Left cardiac atrium (tissue), 4 donors: ENCODE measurements at regions of chr7 and their contacts with region 1.

Region 1: GRCh38 chr7:33459340-33459751 is 330.0 kb downstream of the BBS9 start:
- DNase-seq: no peak
- ATAC-seq: peak; percentile 65 to 81

Region 2: GRCh38 chr7:33114976-33115375 is 344.4 kb before region 1 on chr7:
- intact Hi-C with region 1: no loop called
- DNase-seq: no peak
- ATAC-seq: no peak

Region 3: GRCh38 chr7:33744293-33745075 is 285.1 kb after region 1 on chr7:
- intact Hi-C with region 1: loop called in 1 of 2 experiments (anchors 10 kb)
- DNase-seq: no peak
- ATAC-seq: peak in 1 of 2 donors; percentile 41

Region 4: GRCh38 chr7:33895025-33895804 is 435.9 kb after region 1 on chr7:
- intact Hi-C with region 1: loop called in 1 of 2 experiments (anchors 10 kb)
- DNase-seq: peak; percentile 86
- ATAC-seq: peak; percentile 92 to 95